SK-N-SH (cell line): ENCODE measurements at regions of chr17 and their contacts with region 1.

Region 1: DNA sequence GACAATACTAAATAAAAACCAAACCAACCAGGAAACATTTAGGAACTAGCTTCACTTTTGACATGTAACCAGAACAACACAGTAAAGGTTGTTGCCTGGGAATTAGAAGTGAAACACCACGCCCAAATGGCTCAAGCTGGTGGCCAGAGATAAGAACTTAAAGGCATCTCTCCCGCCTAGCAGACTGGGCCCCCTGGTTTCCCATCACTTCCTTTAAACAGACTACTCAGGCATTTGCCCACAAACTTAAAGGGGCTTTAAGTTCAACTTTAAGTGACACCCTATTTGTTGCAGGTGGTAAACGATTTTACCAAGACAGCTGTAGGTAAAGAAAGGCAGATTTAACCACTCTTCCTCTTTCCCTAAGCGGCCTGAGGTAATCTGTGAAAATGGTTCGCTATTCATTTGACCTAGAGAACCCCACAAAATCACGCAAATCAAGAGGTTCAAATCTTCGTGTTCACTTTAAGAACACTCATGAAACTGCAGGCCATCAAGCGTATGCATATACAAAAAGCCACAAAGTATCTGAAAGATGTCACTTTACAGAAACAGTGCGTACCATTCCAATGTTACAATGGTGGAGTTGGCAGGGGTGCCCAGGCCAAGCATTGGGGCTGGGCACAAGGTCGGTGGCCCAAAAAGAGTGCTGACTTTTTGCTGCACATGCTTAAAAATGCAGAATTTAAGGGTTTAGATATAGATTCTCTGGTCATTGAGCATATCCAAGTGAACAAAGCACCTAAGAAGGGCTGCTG is 40.8 kb upstream of the BPTF start:
- DNase-seq: no peak
- H3K4me3 ChIP-seq: no peak overlapping the region
- H3K27ac ChIP-seq: no peak overlapping the region
- H3K4me1 ChIP-seq: no peaks in the 10 kb centered on the region; a peak in 1 of 4 replicates
- H3K27me3 ChIP-seq: peaks cover 7% of the 10 kb centered on the region; the same call in 1 of the 2 replicates
- CTCF ChIP-seq: no peak
- EP300 ChIP-seq: no peak
- RAD21 ChIP-seq: no peak

Region 2: DNA sequence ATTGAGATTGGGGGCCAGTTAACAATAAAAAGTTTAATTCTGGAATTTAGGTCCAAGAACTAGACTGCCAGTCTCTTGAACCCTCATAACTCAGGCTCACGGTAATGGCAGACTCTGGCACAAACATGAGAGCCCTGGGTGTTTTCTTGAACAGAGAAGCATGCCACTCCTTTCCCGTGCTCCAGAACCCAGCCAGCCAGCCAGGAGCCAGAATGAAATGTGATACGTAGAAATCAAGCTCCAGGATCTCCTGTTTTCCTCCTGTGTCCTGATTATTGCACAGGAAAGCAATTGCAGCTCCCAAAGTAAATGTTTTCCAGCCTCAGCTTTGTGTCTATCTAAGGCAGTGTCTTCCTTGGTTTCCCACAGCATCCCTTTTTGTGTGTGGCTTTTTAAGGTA is 113.1 kb before region 1 on chr17:
- CTCF ChIA-PET with region 1: no interaction called
- POLR2A ChIA-PET with region 1: no interaction called
- DNase-seq: peak; percentile 59
- H3K4me3 ChIP-seq: no peak overlapping the region
- H3K27ac ChIP-seq: peak overlapping the region in 1 of 2 experiments; percentile 13; a peak in 1 of 4 replicates
- H3K4me1 ChIP-seq: peaks cover 8 to 9% of the 10 kb centered on the region in 2 experiments; a peak in 2 of 4 replicates
- H3K27me3 ChIP-seq: no peaks in the 10 kb centered on the region
- CTCF ChIP-seq: no peak
- EP300 ChIP-seq: no peak
- RAD21 ChIP-seq: no peak

Region 3: DNA sequence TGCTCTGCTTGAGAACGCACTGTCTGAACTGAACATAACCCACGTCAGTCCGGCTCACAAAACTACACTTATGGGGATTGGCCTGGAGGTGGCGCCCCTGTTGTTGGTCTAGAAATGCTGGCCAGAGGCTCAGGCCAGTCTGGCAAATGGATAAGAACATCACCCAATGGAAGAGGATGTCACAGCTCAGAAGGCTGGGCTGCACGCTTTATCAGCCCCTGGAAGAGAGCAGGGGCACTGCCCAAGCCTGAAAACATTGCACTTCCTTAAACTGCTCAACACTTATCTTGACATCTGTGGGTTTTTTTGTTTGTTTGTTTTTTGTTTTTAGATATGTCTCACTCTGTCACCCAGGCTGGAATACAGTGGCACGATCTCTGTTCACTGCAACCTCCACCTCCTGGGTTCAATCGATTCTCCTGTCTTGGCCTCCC is 16.0 kb after region 1 on chr17:
- CTCF ChIA-PET with region 1: interaction called, 11 read pairs
- POLR2A ChIA-PET with region 1: no interaction called
- DNase-seq: peak; percentile 85
- H3K4me3 ChIP-seq: no peak overlapping the region
- H3K27ac ChIP-seq: no peak overlapping the region
- H3K4me1 ChIP-seq: no peaks in the 10 kb centered on the region
- H3K27me3 ChIP-seq: no peaks in the 10 kb centered on the region
- CTCF ChIP-seq: peak; percentile 88
- EP300 ChIP-seq: no peak
- RAD21 ChIP-seq: peak; percentile 95

Region 4: DNA sequence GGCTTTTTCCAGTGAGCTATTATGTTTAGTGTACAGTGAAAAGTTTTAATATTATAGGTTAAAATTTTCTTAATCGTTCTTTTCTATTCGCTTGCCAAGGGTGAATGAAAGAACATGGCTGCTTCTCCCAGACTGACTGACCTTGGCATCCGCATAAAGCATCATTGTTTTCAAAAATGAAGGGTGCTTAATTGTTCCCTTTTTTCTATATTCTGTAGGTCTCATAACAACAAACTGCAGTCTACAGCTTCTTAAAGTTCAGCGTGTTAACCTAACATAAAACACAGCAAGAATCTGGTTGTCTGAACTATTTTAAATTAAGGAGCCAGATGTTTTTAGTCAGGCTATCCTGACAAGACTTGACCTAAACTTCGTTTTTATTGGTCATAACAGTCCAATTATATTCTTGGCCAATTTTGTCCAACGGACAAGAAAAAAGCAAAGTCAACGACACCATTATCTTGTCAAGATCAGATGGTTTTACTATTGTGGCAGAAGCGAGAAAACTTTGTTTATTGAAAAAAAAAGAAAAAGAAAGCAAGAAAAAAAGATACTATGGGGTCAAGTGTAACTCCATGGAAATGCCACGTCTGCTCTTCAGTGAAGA is 197.6 kb after region 1 on chr17:
- CTCF ChIA-PET with region 1: no interaction called
- POLR2A ChIA-PET with region 1: no interaction called
- DNase-seq: no peak
- H3K4me3 ChIP-seq: no peak overlapping the region
- H3K27ac ChIP-seq: no peak overlapping the region
- H3K4me1 ChIP-seq: no peaks in the 10 kb centered on the region
- H3K27me3 ChIP-seq: no peaks in the 10 kb centered on the region
- CTCF ChIP-seq: no peak
- EP300 ChIP-seq: no peak
- RAD21 ChIP-seq: no peak